ENCODE measurements at regions of chr9 and their contacts with region 1.

Region 1: DNA sequence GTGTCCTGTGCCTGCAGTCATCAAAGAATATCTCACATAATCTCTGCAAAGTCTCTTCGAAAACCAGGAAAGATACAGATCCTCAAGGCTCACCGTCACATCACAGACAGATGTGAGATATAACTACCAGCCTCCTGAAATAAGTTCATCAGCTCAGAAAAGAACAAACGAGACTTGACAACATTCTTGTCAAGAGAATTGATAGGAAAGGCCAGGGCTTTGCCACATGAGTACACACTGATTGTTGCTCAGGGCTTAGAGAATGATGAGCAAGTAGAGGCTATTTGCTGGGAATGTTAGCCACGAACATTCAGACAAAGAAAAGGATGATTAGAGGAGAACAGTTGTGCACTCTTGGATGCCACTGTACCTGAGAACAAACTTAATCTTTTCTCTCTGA is 535.1 kb downstream of the ELAVL2 start:
- DNase-seq: no peak
- ATAC-seq: no peak

Region 2: GRCh38 chr9:23041466-23041865 is 249.5 kb before region 1 on chr9:
- intact Hi-C with region 1: no loop called
- DNase-seq: no peak
- ATAC-seq: no peak

Region 3: DNA sequence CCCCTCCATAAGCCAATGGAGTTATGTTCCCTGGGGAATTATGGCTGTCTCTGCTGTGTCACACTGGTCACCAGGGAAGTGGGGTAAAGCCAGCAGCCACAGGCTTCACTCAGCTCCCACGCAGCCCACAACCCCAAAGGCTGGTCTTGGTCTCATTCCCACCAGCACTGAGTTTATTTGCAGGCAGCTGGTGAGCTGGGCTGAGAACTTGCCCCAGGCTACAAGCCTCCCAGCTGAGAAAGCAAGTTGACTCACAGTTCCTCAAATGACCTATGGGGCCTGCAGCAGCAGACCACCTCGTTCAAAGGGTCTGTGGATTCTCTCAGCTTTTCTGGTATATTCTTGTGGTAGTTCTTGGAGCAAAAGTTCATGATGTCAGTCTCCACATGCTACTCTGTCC is 66.7 kb after region 1 on chr9:
- intact Hi-C with region 1: loop called (anchors 10 kb)
- DNase-seq: no peak
- ATAC-seq: no peak

Region 4: GRCh38 chr9:23477908-23478307 is 186.9 kb after region 1 on chr9:
- intact Hi-C with region 1: no loop called
- DNase-seq: no peak
- ATAC-seq: no peak